AG04449 (cell line): ENCODE measurements at regions of chr15 and their contacts with region 1.

Region 1: GRCh38 chr15:48877630-48878595 is at the start of gene EID1:
- DNase-seq: peak; percentile 68
- H3K4me3 ChIP-seq: peak within 1 kb of the TSS; percentile 87
- CTCF ChIP-seq: peak; percentile 24

Region 2: DNA sequence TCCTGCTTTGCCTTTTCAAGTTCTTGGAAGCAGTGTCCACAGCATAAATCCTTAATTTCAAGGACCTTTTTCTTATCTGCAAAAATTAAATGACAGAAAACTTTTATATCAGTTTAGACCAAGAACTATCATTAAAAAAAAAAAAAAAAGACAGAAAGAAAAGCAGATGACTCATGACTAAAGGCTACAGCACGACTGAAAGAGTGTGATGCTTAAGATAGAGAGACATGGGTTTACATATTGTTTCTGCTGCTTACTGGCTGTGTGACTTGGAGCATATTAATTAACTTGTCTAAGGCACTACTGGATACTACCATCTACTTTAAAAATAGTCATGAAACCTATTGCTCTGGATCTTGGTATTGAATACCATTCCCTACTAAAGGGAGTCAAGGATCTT is 129.4 kb before region 1 on chr15:
- CTCF ChIA-PET with region 1: no interaction called
- POLR2A ChIA-PET with region 1: no interaction called
- DNase-seq: no peak
- H3K4me3 ChIP-seq: no peak overlapping the region
- CTCF ChIP-seq: no peak

Region 3: GRCh38 chr15:48766196-48766595 is 111.7 kb before region 1 on chr15:
- CTCF ChIA-PET with region 1: no interaction called
- POLR2A ChIA-PET with region 1: no interaction called
- DNase-seq: no peak
- H3K4me3 ChIP-seq: no peak overlapping the region
- CTCF ChIP-seq: no peak

Region 4: DNA sequence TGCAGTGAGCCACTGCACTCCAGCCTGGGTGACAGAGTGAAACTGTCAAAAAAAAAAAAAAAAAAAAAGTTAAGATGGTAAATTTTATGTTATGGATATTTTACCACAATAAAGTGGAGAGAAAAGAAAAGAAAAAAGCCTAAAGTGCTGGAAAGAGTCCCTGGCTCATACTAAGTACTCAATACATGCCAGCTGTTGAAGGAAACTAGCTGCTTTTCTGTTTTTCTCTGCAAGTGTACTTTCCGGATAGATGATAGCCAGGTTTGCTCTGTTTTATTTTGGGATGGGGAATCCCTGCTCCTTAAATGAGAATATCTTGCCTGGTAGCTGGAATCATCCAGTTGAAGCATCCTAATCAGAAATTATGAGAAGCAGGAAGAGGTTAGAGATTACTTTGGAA is 10.9 kb after region 1 on chr15:
- CTCF ChIA-PET with region 1: interaction called, 21 read pairs
- POLR2A ChIA-PET with region 1: interaction called, 6 read pairs
- DNase-seq: no peak
- H3K4me3 ChIP-seq: no peak overlapping the region
- CTCF ChIP-seq: no peak

Region 5: DNA sequence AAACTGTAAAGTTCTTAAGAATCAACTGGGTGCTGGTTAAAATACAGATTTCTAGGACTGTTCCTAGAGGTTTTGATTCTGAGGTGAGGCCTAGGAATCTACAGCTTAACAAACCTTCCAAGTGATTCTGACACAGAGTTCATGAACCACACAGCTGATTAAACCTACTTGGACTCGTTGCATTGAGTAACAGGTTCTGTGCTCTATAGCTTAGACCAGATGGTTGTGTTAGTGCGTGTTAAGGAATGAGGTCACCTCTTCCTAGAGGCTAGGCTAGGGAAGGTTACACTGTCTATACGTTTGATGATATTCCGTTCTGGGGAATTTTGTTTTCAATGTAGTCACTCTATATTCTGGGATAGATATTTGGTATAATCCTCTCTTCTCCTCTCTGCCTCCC is 21.9 kb after region 1 on chr15:
- CTCF ChIA-PET with region 1: no interaction called
- POLR2A ChIA-PET with region 1: no interaction called
- DNase-seq: no peak
- H3K4me3 ChIP-seq: no peak overlapping the region
- CTCF ChIP-seq: no peak